ENCODE measurements at regions of chr6 and their contacts with region 1.

Region 1: GRCh38 chr6:118971682-118972081 is 36.7 kb upstream of the MCM9 start:
- DNase-seq: no peak
- ATAC-seq: no peak
- H3K4me3 ChIP-seq: no peak overlapping the region
- H3K27ac ChIP-seq: no peak overlapping the region
- H3K4me1 ChIP-seq: no peaks in the 10 kb centered on the region
- H3K27me3 ChIP-seq: no peaks in the 10 kb centered on the region
- CTCF ChIP-seq: no peak

Region 2: DNA sequence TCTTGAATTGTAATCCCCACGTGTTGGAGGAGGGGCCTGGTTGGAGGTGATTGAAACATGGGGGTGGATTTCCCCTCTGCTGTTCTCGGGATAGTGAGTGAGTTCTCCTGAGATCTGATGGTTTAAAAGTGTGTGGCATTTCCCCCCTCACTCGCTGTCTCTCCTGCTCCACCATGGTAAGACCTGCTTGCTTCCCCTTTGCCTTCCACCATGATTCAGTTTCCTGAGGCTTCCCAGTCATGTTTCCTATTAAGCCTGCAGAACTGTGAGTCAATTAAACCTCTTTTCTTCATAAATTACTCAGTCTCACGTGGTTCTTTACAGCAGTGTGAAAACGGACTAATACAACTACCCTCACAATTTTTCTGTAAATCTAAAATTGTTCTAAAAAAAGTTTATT is 133.6 kb after region 1 on chr6:
- intact Hi-C with region 1: loop called (anchors 10 kb)
- DNase-seq: no peak
- ATAC-seq: no peak
- H3K4me3 ChIP-seq: no peak overlapping the region
- H3K27ac ChIP-seq: no peak overlapping the region
- H3K4me1 ChIP-seq: no peaks in the 10 kb centered on the region
- H3K27me3 ChIP-seq: no peaks in the 10 kb centered on the region
- CTCF ChIP-seq: no peak

Measured in upper lobe of right lung (tissue), 1 donor.